ENCODE measurements at regions of chr1 and their contacts with region 1.

Region 1: DNA sequence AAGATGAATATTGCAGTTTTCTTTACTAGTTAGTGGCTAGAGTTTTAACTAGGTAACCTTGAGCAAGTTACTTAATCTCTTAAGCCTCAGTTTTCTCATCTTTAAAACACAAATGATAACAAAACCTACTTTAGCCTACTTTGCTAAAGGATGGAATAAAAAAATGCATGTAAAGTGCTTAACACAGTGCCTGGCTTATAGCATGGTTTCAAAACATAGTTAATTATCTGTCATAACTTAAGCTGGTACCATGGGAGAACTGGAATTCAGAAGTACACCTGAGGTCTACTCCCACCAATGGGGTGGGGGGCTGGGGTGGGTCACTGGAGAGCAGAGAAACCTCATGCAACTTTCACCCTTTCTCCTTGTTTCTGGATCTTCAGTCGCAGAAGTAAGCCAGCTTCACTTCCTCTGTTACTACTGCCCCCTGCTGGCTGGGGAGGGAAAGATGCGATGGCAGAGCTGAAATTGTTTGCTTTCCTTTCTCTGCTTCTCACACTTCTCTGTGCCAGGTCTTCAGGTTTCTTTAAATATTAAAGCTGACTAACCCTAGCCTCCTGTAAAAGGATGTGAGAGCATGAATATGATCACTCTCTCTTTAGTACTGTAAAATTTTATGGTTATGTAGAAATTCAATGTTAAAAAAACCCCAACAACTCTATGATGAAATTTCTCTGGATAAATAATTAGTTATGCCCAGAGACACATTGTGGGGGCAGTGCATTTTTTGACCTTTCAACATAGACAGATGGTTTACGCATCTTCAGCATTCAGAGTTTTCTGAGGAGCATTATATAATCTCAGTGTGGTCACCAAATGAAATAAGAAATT is 324.2 kb downstream of the HLX start:
- DNase-seq: peak; percentile 54
- ATAC-seq: peak; percentile 84
- H3K4me3 ChIP-seq: no peak overlapping the region
- H3K27ac ChIP-seq: no peak overlapping the region
- H3K4me1 ChIP-seq: no peaks in the 10 kb centered on the region
- H3K27me3 ChIP-seq: no peaks in the 10 kb centered on the region
- CTCF ChIP-seq: peak; percentile 63 to 88 (median 83)
- POLR2A ChIP-seq: no peak
- RAD21 ChIP-seq: peak; percentile 73

Region 2: GRCh38 chr1:220810179-220810653 is 393.2 kb before region 1 on chr1:
- CTCF ChIA-PET with region 1: interaction called, 5 read pairs
- POLR2A ChIA-PET with region 1: no interaction called
- RAD21 ChIA-PET with region 1: interaction called in 1 of 2 experiments, 3 read pairs
- intact Hi-C with region 1: loop called (anchors 5 kb)
- DNase-seq: peak; percentile 38
- ATAC-seq: peak; percentile 95
- H3K4me3 ChIP-seq: no peak overlapping the region
- H3K27ac ChIP-seq: no peak overlapping the region
- H3K4me1 ChIP-seq: no peaks in the 10 kb centered on the region; a peak in 1 of 4 replicates
- H3K27me3 ChIP-seq: no peaks in the 10 kb centered on the region
- CTCF ChIP-seq: peak; percentile 66 to 87 (median 85)
- POLR2A ChIP-seq: no peak
- RAD21 ChIP-seq: peak; percentile 78

Region 3: GRCh38 chr1:220873868-220874655 is 329.4 kb before region 1 on chr1:
- CTCF ChIA-PET with region 1: interaction called, 7 read pairs
- POLR2A ChIA-PET with region 1: no interaction called
- RAD21 ChIA-PET with region 1: no interaction called
- intact Hi-C with region 1: loop called (anchors 1 kb)
- DNase-seq: peak; percentile 16
- ATAC-seq: peak; percentile 57
- H3K4me3 ChIP-seq: no peak overlapping the region
- H3K27ac ChIP-seq: no peak overlapping the region
- H3K4me1 ChIP-seq: peaks cover 0 to 4% of the 10 kb centered on the region in 2 experiments; a peak in 1 of 4 replicates
- H3K27me3 ChIP-seq: no peaks in the 10 kb centered on the region
- CTCF ChIP-seq: peak; percentile 62 to 82 (median 63)
- POLR2A ChIP-seq: no peak
- RAD21 ChIP-seq: peak; percentile 83

Region 4: GRCh38 chr1:220908757-220909156 is 294.7 kb before region 1 on chr1:
- CTCF ChIA-PET with region 1: interaction called, 16 read pairs
- POLR2A ChIA-PET with region 1: no interaction called
- RAD21 ChIA-PET with region 1: no interaction called
- intact Hi-C with region 1: loop called (anchors 2 kb)
- DNase-seq: peak; percentile 1
- ATAC-seq: no peak
- H3K4me3 ChIP-seq: no peak overlapping the region
- H3K27ac ChIP-seq: no peak overlapping the region
- H3K4me1 ChIP-seq: no peaks in the 10 kb centered on the region
- H3K27me3 ChIP-seq: peaks cover 4% of the 10 kb centered on the region; the same call in 1 of the 2 replicates
- CTCF ChIP-seq: peak; percentile 45 to 53 (median 50); a peak in 5 of 6 replicates
- POLR2A ChIP-seq: no peak
- RAD21 ChIP-seq: peak; percentile 61

Measured in HCT116 (cell line).